ENCODE measurements at regions of chr3 and their contacts with region 1.

Region 1: DNA sequence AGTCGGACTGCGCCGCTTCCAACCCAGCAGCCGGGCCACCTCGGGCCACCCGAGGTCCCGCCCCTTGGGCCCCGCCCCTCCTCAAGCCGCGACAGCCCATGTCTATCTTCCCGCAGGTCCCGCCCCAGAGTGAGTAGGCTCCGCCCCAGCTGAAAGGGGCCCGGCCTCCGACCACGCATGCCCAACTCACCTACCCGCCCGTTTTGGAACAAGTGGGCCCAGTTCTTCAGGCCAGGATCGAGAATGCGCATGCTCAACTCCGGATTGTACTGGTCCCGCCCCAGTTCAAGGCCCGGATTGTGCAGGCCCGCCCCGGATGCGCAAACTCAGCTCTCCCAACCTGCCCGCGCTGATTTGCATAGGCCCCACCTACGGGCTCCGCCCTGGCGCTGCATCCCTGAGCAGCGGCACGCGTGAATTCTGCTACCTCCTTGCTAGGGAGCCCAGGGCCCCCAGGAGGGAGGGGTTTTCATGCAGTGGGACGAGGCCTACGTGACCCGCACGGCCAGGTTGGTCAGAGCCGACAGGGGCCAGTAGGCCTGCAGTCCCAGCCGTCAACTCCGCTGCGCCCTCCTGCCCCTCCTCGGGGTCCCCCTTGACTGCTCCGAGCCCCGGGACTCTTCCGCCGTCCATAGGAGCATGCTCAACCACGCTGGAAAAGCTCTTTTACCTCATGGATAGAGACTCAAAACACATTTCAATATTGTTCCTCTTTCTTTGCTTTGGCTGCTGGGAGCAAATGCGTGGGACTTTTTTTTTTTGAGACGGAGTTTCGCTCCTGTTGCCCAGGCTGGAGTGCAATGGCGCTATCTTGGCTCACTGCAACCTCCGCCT is at the start of gene PFKFB4:
- DNase-seq: peak; percentile 100
- H3K4me3 Mint-ChIP-seq: peak within 1 kb of the TSS; percentile 84
- H3K27ac Mint-ChIP-seq: peak within 1 kb of the TSS; percentile 50
- H3K4me1 Mint-ChIP-seq: peaks cover 11% of the 10 kb centered on the region
- H3K27me3 Mint-ChIP-seq: no peaks in the 10 kb centered on the region
- total RNA-seq, gene PFKFB4: 5.1 to 5.4 TPM

Region 2: DNA sequence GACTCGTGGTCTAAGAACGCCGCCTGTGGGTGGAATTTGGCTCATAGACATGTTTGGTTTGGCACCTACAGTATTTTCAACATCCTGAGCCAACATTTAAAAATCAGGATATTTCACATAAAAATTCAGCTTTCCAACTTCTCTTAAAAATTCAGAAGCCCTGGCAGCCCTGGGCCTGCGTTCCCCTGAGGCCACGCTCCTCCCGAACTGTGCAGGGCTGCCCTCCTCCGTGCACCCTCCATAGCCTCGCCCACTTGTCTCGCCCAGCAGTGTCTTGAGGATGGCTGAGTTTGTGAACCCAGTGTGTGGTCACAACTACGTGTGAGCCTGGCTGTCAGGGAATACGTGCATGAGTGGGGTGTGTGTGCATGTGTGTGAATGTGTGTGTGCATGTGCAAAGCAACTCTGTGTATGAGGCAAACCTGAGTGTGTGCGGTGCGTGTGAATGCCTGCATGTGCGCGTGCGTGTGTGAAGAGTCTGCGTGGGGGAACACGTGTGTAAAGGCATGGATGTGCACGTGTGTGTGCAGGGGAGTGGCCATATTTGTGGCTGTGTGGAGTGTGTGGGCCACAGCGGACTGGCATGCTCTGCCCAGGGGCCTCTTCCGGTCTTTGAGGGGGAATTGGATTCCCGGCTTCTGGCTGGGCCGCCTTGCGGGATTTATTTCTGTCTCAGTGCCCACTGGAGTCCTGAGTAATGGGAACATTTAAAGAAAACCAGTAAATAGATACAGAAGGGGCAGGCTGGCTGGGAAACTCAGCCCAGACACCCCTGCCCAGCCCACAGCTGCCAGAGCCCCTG is 1648.5 kb before region 1 on chr3:
- CTCF ChIA-PET with region 1: no interaction called
- intact Hi-C with region 1: no loop called
- DNase-seq: no peak
- H3K4me3 Mint-ChIP-seq: no peak overlapping the region
- H3K27ac Mint-ChIP-seq: no peak overlapping the region
- H3K4me1 Mint-ChIP-seq: peaks cover 5% of the 10 kb centered on the region
- H3K27me3 Mint-ChIP-seq: no peaks in the 10 kb centered on the region

Region 3: GRCh38 chr3:48088749-48089466 is 468.1 kb before region 1 on chr3:
- CTCF ChIA-PET with region 1: no interaction called
- intact Hi-C with region 1: loop called (anchors 5 kb)
- DNase-seq: peak; percentile 95
- H3K4me3 Mint-ChIP-seq: peak overlapping the region; percentile 94
- H3K27ac Mint-ChIP-seq: peak overlapping the region; percentile 95
- H3K4me1 Mint-ChIP-seq: peaks cover 29% of the 10 kb centered on the region
- H3K27me3 Mint-ChIP-seq: no peaks in the 10 kb centered on the region

Region 4: DNA sequence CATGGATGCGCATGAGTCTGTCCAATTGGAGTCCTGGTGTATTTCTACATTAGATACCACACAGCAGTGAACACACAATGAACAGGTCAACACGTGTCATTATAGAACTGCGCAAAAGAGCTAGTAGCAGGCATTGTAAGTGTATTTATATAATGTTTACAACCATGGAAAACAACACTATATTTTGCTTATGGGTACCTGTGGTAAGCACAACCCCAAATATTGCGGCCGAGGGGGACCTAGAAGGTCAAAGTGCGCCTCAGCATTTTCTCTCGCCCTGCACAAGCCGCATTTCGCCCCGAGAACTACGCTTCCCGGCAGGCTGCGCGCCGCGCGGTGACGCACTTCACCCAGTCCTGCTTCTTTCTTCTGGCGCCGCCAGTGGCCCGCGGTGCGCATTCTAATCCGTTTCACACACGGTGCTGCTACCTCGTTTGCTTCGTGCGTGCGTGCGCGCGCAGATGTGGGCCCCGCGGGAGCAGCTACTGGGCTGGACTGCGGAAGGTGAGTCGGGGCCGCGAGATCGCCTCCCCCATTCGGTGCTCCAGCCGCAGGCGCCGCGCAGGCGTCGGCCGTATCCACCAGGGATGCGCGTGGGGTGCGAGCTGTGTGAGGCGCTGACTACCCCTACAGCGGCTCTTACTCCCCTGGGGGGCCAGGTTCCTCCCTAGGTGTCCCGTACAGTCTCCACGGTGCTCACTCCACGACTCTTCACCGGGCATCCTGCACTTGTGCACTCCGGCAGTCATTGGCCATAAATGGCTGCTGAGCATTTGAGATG is 316.1 kb before region 1 on chr3 and contains the start of gene ZNF589:
- CTCF ChIA-PET with region 1: interaction called, 3 read pairs
- intact Hi-C with region 1: loop called (anchors 1 kb)
- DNase-seq: peak; percentile 96
- H3K4me3 Mint-ChIP-seq: peak within 1 kb of the TSS; percentile 88
- H3K27ac Mint-ChIP-seq: peak within 1 kb of the TSS; percentile 86
- H3K4me1 Mint-ChIP-seq: peaks cover 28% of the 10 kb centered on the region
- H3K27me3 Mint-ChIP-seq: no peaks in the 10 kb centered on the region
- total RNA-seq, gene ZNF589: 15.8 to 16.3 TPM

Region 5: DNA sequence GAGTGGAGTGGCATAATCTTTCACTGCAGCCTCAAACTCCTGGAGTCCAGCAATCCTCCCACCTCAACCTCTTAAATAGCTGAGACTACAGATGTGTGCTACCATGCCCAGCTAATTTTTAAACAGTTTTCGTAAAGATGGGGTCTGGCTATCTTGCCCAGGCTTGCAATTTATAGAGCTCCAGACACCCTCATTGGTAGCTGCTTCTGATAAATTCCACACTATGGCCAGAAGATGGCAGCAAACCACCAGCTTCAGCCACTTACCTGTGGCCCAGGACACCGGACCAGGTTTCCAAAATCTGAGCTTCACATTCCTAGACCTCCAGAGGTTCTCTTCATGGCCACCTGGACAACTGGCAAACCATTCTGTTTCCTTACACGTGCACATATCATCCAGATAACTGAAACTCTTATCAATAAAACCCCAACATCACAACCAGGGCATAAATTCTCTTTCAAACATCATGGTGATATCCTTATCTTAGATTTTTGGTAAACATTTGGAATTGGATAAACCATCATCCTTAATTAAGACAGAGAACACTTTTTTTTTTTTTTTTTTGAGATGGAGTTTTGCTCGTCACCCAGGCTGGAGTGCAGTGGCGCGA is 156.1 kb before region 1 on chr3:
- CTCF ChIA-PET with region 1: interaction called, 64 read pairs
- intact Hi-C with region 1: no loop called
- DNase-seq: peak; percentile 77
- H3K4me3 Mint-ChIP-seq: no peak overlapping the region
- H3K27ac Mint-ChIP-seq: no peak overlapping the region
- H3K4me1 Mint-ChIP-seq: no peaks in the 10 kb centered on the region
- H3K27me3 Mint-ChIP-seq: peaks cover under 1% of the 10 kb centered on the region

Region 6: DNA sequence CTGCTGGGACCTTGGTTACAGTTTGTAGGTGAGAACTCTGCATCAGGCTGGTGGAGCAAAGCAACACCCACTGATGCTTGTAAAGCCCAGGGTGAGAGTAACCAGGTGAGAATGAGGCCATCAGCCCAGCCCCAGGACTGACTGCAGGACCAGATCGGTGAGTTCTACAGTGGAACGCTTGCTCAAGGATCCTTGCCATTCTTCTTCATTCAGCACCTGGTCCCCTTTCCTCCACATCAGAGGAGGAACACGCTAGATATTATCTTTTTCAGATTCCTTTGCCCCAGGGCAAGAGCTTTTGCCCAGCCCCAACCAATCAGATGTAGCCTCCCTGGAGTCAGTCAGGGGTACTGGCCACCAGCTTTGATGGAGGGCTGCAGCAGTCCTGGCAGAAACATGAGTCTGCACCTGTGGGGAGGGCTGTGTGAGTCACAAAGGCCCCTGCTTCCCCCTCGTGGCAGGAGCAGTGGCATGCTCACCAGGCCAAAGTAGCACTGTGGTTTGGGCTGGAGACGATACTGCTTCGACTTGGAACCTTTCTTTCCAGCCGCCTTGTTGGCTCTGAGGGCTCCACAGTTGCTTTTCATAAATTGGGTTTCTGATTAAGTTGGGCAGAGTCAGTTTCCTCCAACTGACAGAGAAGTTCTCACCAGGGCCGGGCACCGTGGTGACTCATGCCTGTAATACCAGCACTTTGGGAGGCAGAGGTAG is 49.5 kb before region 1 on chr3:
- CTCF ChIA-PET with region 1: interaction called, 3 read pairs
- intact Hi-C with region 1: loop called (anchors 2 kb)
- DNase-seq: peak; percentile 82
- H3K4me3 Mint-ChIP-seq: peak overlapping the region; percentile 32
- H3K27ac Mint-ChIP-seq: peak overlapping the region; percentile 66
- H3K4me1 Mint-ChIP-seq: peaks cover 47% of the 10 kb centered on the region
- H3K27me3 Mint-ChIP-seq: no peaks in the 10 kb centered on the region

Region 7: GRCh38 chr3:48573973-48574585 is 17.1 kb after region 1 on chr3:
- CTCF ChIA-PET with region 1: no interaction called
- intact Hi-C with region 1: no loop called
- DNase-seq: no peak
- H3K4me3 Mint-ChIP-seq: no peak overlapping the region
- H3K27ac Mint-ChIP-seq: no peak overlapping the region
- H3K4me1 Mint-ChIP-seq: no peaks in the 10 kb centered on the region
- H3K27me3 Mint-ChIP-seq: no peaks in the 10 kb centered on the region

Region 8: DNA sequence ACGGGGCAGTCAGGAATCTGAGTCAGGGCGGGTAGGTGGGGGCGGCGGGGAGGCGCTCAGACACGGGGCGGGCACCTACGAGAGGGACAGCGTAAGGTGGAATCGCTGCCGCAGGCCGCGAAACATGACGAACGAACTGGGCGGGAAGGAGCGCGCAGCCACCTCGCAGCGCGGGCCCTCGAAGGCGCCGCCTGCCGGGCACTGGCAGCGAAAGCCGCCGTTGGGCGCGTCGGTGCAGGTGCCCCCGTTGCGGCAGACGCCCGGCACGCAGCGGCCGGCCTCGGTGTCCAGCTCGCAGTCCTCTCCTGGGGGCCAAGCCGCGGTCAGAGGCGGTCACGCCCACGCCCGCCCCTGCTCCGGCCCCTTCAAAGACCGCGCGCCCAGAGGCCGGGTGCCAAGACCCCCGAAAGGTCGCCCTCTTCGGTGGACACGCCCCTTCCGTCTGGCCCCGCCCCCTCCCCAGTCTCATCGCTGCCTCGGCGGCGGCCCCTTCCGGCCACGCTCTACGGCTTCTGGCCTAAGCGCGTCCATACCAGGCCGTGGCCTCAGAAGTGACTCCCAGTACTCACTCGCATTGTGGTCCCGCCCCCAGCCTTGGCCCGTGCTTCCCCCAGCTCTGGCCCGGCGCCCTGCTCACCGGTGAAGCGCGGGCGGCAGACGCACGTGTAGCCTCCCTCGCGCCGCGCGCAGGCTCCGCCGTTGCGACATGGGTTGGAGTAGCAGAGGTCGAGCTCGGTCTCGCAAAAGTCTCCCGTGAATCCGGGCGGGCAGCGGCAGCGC is 99.2 kb after region 1 on chr3:
- CTCF ChIA-PET with region 1: no interaction called
- intact Hi-C with region 1: loop called (anchors 1 kb)
- DNase-seq: peak; percentile 89
- H3K4me3 Mint-ChIP-seq: peak overlapping the region; percentile 76
- H3K27ac Mint-ChIP-seq: peak overlapping the region; percentile 64
- H3K4me1 Mint-ChIP-seq: peaks cover 17% of the 10 kb centered on the region
- H3K27me3 Mint-ChIP-seq: peaks cover 13% of the 10 kb centered on the region

Region 9: DNA sequence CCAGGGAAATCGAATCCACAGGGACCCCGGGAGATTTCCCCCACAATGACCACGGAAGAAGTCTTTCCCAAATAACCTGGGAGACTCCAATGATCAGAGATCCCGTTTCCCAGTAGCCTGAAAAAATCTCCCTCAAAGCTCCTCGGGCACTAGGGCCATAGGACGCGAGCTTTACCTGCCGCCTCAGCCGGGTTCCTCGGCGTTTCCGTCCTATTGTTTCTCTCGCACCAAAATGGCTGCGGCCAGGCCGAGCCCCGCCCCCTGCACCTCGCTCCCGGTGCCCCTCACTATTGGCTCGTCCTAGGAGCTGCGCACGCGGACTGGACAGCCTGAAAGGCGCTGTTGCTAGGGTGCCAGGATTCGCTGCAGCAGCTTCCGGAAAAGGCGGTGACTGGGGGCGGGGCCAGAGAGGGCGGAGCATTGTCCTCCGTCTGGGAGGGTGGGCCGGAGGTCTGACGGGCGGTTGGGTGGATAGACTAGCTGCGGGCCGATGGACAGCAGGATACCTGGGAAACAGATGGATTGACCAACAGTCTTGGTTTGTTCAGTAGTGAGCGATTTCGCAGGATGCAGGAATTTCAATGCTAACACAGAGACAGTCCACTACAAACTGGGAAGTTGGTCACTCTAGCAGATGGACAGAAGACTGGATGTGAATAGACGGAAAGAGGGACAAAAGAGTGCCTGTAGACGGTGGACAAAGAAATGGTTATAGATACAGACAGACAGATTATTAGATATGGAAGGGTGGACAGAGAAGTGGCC is 160.2 kb after region 1 on chr3 and contains the start of gene IP6K2:
- CTCF ChIA-PET with region 1: no interaction called
- intact Hi-C with region 1: loop called (anchors 1 kb)
- DNase-seq: peak; percentile 99
- H3K4me3 Mint-ChIP-seq: peak within 1 kb of the TSS; percentile 97
- H3K27ac Mint-ChIP-seq: peak within 1 kb of the TSS; percentile 90
- H3K4me1 Mint-ChIP-seq: peaks cover 30% of the 10 kb centered on the region
- H3K27me3 Mint-ChIP-seq: no peaks in the 10 kb centered on the region
- total RNA-seq, gene IP6K2: 64.3 to 68.3 TPM